ENCODE measurements at regions of chr12 and their contacts with region 1.

Region 1: DNA sequence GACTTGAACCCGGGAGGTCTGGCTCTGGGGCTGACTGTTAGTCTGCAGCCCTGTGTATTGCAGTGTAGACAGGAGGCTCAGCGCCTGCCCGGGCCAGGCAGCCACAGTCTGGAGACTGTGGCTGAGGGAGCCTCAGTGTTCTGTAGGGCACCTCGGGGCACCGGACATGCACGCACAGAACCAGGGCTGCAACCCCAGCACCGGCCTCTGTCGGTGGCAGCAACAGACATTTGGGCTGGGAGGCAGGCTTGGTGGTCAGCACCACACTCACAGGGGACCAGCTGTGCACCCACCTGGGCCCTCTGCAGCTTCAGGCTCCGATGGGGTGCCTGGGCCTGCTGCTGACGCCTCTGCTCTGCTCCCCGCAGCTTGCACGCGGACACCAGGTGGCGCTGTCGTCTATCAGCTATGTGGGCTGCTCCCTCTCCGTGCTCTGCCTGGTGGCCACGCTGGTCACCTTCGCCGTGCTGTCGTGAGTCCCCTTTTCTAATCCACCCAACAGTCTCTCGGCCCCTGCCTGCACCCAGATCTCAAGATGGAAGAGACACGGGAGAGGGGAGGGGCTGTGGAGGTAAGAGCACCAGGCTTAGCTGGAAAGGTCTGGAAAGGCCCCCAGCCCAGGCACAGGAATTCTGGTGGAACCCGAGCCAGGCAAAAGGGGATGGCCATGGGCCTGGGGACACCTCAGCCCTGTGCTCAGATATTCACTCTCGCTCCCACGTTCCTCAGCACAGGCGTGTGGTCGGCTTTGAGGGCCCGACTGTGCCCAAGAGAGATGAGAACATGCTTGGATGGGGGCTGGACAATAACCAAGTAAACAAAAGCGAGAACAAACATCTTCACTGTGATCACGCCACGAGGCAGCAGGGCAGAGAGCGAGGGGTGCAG is 151.0 kb downstream of the ADGRD1 start:
- DNase-seq: peak; percentile 81
- H3K4me3 Mint-ChIP-seq: no peak overlapping the region
- H3K27ac Mint-ChIP-seq: no peak overlapping the region
- H3K4me1 Mint-ChIP-seq: peaks cover 15% of the 10 kb centered on the region
- H3K27me3 Mint-ChIP-seq: peaks cover 4% of the 10 kb centered on the region

Region 2: DNA sequence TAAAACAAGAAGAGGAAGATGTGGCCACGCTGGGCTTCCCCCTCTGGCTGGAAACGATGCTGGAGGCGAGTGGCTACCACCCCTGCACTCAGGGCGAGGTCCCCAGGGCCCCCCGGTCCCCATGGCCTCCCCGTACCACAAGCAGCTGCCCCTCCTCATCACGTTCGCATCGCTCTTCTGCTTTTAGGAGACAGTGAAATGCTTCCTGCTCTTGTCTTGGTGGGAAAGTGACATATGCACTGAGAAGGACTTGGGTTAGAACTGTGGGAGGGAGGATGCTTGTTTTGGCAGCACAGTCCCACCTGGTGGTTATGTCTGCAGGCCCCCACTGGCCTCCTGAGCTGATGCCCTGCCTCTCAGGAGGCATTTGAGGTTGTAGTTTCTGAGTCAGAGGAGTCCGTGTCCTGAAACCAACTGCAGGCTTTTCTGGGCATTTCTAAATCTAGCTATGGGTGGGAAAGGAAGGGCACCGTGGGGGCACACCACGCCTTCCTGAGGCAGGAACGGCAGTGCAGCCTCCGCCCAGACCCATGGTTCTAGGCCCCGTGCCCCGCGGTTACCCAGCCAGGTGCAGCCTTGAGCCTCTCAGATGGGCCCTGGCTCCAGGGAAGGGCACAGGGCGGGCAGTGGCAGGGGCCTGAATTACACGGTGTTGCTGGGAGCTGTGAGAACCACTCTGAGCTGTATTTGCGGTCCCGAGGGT is 11.7 kb before region 1 on chr12:
- CTCF ChIA-PET with region 1: interaction called, 10 read pairs
- POLR2A ChIA-PET with region 1: no interaction called
- DNase-seq: peak; percentile 20
- H3K4me3 Mint-ChIP-seq: no peak overlapping the region
- H3K27ac Mint-ChIP-seq: no peak overlapping the region
- H3K4me1 Mint-ChIP-seq: peaks cover 17% of the 10 kb centered on the region
- H3K27me3 Mint-ChIP-seq: no peaks in the 10 kb centered on the region

Region 3: DNA sequence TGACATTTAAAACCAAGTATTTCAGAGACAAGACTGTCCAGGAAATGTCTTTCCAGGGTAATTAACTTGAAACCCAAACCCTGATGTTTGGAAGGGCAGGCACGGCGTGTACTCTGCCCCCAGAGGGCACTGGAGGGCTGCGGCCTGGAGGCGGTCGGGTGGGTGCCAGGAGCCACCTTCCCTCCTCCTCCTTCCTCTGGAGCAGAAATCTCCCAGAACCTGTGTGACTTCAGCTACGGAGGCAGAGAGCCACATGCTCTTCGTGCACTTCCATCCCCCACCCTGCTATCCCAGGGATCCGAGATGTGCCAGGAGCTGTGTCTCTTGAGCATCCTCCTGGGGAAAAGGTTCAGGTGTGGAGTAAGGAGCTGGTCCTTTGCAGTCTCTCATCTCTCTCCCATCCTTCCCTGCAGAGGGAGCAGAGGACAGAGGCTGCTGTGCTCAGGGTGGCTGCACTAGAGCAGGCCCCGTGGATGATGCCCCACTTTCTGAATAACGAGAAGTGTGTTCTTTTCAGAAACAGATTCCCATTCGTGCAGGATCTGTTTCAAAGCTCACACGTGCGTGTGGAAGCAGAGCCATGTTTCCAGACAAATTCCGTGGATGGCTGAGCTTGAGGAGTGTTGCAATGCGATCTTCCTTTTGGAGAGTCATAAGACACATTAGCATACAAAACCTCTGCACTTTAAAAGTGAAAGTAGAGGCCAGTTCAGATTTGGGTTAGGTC is 11.8 kb after region 1 on chr12:
- CTCF ChIA-PET with region 1: interaction called, 30 read pairs
- POLR2A ChIA-PET with region 1: no interaction called
- DNase-seq: no peak
- H3K4me3 Mint-ChIP-seq: no peak overlapping the region
- H3K27ac Mint-ChIP-seq: no peak overlapping the region
- H3K4me1 Mint-ChIP-seq: no peaks in the 10 kb centered on the region
- H3K27me3 Mint-ChIP-seq: no peaks in the 10 kb centered on the region

Region 4: GRCh38 chr12:131132118-131132892 is 27.6 kb after region 1 on chr12:
- CTCF ChIA-PET with region 1: interaction called, 38 read pairs
- POLR2A ChIA-PET with region 1: no interaction called
- DNase-seq: peak; percentile 68
- H3K4me3 Mint-ChIP-seq: no peak overlapping the region
- H3K27ac Mint-ChIP-seq: no peak overlapping the region
- H3K4me1 Mint-ChIP-seq: no peaks in the 10 kb centered on the region
- H3K27me3 Mint-ChIP-seq: no peaks in the 10 kb centered on the region

Measured in activated CD4-positive, alpha-beta T cell treated with anti-CD3 and anti-CD28 coated beads, Interleukin-2, amount 10 ng/mL, durations not matched to agents 7 days and 5 days (primary cell).